Activated CD4-positive, alpha-beta T cell treated with anti-CD3 and anti-CD28 coated beads, Interleukin-2, amount 10 ng/mL, durations not matched to agents 7 days and 5 days (primary cell): ENCODE measurements at regions of chr17 and their contacts with region 1.

Region 1: DNA sequence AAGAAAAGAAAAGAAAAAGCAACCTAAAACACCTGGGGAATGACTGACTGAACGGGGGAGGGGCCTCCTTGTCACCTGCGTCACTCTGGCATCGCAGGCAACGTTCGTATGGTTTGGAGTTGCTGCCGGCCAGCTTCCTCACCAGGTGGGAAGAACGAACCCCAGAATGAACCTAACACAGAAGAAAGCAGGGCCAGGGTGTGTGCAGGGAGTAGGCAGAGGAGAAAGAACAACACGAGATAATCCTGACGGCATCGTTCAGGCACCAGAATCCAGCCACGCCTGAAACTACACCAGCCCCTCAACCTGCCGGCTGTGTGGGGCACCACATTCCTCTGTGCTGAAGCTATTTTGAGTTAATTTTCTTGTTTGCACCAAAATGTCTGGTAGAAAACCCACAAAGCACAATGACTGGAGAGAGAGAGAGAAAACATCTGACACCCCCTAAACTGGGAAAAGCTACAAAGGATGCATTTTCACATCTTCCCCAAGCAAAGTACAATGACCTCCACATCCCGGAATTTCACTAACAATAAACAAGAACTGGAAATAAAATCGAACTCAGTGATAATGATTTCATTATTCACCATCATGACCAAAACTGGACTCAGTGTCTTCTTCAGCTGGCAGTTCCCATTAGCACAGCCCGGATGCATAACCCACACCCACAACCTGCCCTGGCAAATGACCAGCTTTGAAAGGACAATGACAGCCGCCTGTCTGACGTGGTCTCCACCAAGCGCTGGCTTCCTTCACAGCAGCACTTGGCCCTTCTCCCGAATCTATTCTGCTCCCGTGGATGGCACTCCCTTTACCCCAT is 23.6 kb downstream of the RAB40B start:
- DNase-seq: no peak
- H3K4me3 Mint-ChIP-seq: no peak overlapping the region
- H3K27ac Mint-ChIP-seq: no peak overlapping the region
- H3K4me1 Mint-ChIP-seq: peaks cover 3% of the 10 kb centered on the region
- H3K27me3 Mint-ChIP-seq: no peaks in the 10 kb centered on the region

Region 2: DNA sequence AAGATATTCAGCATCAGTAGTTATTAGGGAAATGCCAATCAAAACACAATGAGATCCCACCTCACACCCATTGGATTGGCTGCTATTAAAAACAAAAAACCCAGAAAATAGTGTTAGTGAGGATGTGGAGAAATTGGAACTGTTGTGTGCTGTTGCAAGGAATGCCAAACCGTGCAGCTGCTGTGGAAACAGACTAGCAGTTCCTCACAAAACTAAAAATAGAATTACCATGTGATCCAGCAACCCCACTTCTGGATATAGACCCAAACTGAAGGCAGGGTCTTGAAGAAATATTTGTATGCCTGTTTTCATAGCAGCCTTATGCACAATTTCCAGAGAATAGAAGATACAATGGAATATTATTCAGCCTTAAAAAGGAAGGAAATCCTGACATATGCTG is 109.3 kb before region 1 on chr17:
- CTCF ChIA-PET with region 1: no interaction called
- POLR2A ChIA-PET with region 1: no interaction called
- DNase-seq: no peak
- H3K4me3 Mint-ChIP-seq: no peak overlapping the region
- H3K27ac Mint-ChIP-seq: no peak overlapping the region
- H3K4me1 Mint-ChIP-seq: peaks cover 8% of the 10 kb centered on the region
- H3K27me3 Mint-ChIP-seq: no peaks in the 10 kb centered on the region

Region 3: GRCh38 chr17:82615084-82616020 is 59.5 kb before region 1 on chr17:
- CTCF ChIA-PET with region 1: no interaction called
- POLR2A ChIA-PET with region 1: no interaction called
- DNase-seq: no peak
- H3K4me3 Mint-ChIP-seq: no peak overlapping the region
- H3K27ac Mint-ChIP-seq: no peak overlapping the region
- H3K4me1 Mint-ChIP-seq: no peaks in the 10 kb centered on the region
- H3K27me3 Mint-ChIP-seq: no peaks in the 10 kb centered on the region

Region 4: DNA sequence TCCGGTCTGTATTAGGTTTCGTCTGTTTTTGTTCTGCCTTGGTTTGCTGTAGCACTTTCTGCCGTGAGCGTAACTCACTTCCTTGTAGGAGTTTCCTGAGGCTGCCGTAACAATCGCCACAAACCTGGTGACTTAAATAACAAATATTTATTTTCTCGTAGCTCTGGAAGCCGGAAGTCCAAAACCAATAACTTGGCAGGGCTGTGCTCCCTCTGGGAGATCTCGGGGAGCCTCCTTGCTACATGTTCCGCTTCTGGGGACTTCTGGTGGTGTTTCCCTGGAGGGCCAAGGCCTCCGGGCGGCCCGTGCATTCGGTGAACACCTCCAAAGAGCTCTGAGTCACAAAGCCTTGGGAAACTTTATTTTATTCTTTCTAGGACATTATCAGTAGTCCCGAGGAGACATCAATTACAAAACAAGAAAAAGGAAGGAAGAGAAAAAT is 19.8 kb before region 1 on chr17:
- CTCF ChIA-PET with region 1: no interaction called
- POLR2A ChIA-PET with region 1: no interaction called
- DNase-seq: no peak
- H3K4me3 Mint-ChIP-seq: no peak overlapping the region
- H3K27ac Mint-ChIP-seq: no peak overlapping the region
- H3K4me1 Mint-ChIP-seq: no peaks in the 10 kb centered on the region
- H3K27me3 Mint-ChIP-seq: no peaks in the 10 kb centered on the region

Region 5: DNA sequence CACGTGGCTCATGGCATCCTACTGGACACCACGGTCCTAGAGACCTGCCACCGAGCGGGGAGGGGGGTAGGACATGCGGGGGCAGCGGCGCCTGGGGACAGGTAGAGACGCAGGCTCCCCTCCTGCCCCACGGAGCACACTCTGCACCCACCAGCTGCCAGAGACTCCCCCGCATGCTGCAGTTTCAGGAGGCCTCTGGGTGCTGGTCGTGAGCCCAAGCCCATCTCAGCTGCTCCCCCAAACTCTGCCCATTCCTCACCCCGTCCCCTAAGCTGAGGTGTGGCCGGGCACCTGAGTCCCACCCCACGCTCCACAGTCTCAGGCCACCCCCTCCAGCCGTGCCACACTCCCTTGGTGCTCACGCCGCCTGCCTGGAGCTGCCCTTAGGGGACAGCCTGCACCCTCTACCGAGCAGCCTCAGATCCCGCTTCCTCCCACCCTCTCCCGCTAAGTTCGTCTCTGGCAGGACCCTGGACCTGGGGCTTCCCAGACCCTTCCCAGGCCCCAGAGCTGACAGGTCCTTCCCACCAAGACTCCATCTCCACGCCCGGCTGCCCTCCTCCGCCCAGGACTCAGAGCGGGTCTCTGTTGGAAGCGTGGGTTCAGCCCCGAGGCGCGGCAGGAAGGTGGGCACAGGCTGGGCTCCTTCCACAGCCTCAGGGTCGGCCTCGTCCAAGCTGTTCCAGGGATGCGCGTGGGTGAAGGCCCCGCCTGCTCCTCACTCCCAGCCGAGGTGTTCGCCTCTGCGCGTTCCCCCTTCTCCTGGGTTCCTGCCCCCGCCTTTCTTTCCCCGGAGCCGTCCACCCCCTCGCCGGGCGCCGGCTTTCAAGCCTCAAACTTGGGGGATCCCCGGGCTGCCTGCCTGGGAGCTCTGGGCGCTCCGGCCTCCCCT is 22.3 kb after region 1 on chr17:
- CTCF ChIA-PET with region 1: interaction called, 10 read pairs
- POLR2A ChIA-PET with region 1: interaction called, 3 read pairs
- DNase-seq: no peak
- H3K4me3 Mint-ChIP-seq: peak overlapping the region; percentile 49
- H3K27ac Mint-ChIP-seq: no peak overlapping the region
- H3K4me1 Mint-ChIP-seq: peaks cover 5% of the 10 kb centered on the region
- H3K27me3 Mint-ChIP-seq: peaks cover 12% of the 10 kb centered on the region